Esophagus muscularis mucosa (tissue), 4 donors: ENCODE measurements at regions of chr12 and their contacts with region 1.

Region 1: GRCh38 chr12:51994959-51995358 is 11.8 kb upstream of the TAMALIN start:
- DNase-seq: no peak
- H3K4me3 ChIP-seq: no peak overlapping the region
- H3K27ac ChIP-seq: no peak overlapping the region
- H3K4me1 ChIP-seq: peaks cover 0 to 4% (median 1%) of the 10 kb centered on the region in 4 donors
- H3K27me3 ChIP-seq: no peaks in the 10 kb centered on the region
- CTCF ChIP-seq: no peak
- EP300 ChIP-seq: no peak
- POLR2A ChIP-seq: no peak

Region 2: DNA sequence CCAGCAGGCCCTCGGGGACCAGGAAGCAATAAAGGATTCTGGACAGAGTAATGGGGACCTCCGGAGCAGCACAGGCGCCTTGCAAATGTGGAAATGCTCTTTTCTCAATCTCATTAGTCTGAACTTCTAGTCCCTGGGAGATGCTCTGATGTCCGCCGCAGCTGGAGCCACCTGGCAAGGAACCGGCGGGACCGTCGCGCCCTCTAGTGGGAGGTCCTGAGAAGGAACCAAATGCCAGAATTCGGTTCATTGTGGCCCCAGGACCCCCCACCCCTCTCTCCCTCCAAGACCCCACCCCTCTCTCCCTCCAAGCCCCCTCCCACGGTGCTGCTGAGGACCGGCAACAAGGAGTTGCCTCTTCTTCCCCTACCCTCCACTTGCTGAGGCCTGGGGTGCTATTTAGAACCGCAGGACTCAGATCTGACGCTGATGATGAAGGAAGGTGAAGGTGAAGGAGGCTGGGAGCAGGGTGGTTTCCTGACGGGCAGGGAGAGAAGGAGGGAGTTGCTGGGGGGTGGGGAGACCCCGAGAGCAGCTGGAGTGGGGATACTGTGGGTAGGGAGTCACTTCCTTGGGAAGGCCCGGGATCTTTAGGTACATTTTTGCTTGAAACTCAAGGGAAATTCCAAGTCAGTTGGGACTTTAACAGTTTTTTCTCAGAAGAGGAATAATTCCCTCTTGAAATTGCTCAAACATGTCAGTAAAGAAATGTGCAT is 127.0 kb after region 1 on chr12:
- intact Hi-C with region 1: loop called (anchors 5 kb)
- DNase-seq: no peak
- H3K4me3 ChIP-seq: no peak overlapping the region
- H3K27ac ChIP-seq: no peak overlapping the region
- H3K4me1 ChIP-seq: peaks cover 15 to 27% (median 21%) of the 10 kb centered on the region in 4 donors
- H3K27me3 ChIP-seq: peaks cover 0 to 51% (median 2%) of the 10 kb centered on the region in 4 donors
- CTCF ChIP-seq: peak; percentile 53 to 81 (median 62)
- EP300 ChIP-seq: no peak
- POLR2A ChIP-seq: no peak

Region 3: GRCh38 chr12:52243856-52244614 is 249.1 kb after region 1 on chr12:
- intact Hi-C with region 1: no loop called
- DNase-seq: no peak
- H3K4me3 ChIP-seq: no peak overlapping the region
- H3K27ac ChIP-seq: peak overlapping the region; percentile 33 to 65 (median 54)
- H3K4me1 ChIP-seq: peaks cover 23 to 56% (median 45%) of the 10 kb centered on the region in 4 donors
- H3K27me3 ChIP-seq: peaks cover 0 to 13% (median 0%) of the 10 kb centered on the region in 4 donors
- CTCF ChIP-seq: no peak
- EP300 ChIP-seq: no peak
- POLR2A ChIP-seq: no peak